ENCODE measurements at regions of chr2 and their contacts with region 1.

Region 1: GRCh38 chr2:100938031-100939026 is 63.8 kb upstream of the RPL31 start:
- DNase-seq: no peak
- ATAC-seq: no peak
- H3K4me3 ChIP-seq: no peak overlapping the region
- H3K27ac ChIP-seq: no peak overlapping the region
- H3K4me1 ChIP-seq: peaks cover 3 to 10% of the 10 kb centered on the region in 2 donors
- H3K27me3 ChIP-seq: no peaks in the 10 kb centered on the region

Region 2: DNA sequence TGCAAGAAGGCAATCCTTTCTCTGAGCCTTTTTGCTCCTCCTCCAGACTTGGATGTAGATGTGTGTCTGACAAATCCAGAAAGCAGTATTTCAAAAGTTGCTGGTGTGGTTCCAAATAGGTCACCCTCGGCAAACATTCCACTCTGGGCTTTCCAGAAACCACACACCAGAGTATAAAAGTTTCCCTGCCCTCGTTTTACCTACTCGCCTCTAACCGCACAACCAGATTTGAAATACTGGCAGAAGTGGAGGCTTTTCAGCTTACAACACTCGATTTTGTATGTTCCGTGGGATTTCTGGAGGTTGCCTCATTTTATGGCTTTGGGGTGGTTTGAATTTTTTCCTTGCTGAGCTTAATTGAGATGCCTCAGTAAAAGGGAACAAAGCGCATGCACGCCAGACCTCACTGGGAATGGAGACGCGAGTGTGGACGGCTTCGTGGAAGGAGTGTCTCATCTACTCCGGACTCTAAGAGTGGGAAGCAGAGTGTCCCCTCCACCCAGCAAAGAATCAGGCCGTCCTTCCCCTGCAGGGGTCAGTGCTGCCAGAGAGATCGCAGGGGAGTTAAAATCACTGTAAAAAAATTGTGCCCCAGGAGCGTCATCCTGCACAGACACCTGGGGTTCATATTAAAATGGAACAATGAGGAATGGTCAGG is 19.8 kb after region 1 on chr2:
- intact Hi-C with region 1: loop called in 1 of 2 experiments (anchors 2 kb)
- DNase-seq: peak in 1 of 2 donors; percentile 73
- ATAC-seq: peak; percentile 81
- H3K4me3 ChIP-seq: no peak overlapping the region
- H3K27ac ChIP-seq: peak overlapping the region in 1 of 2 donors; percentile 85
- H3K4me1 ChIP-seq: peaks cover 0 to 3% of the 10 kb centered on the region in 2 donors
- H3K27me3 ChIP-seq: no peaks in the 10 kb centered on the region

Region 3: GRCh38 chr2:101094351-101094750 is 156.0 kb after region 1 on chr2:
- intact Hi-C with region 1: no loop called
- DNase-seq: no peak
- ATAC-seq: no peak
- H3K4me3 ChIP-seq: no peak overlapping the region
- H3K27ac ChIP-seq: no peak overlapping the region
- H3K4me1 ChIP-seq: no peaks in the 10 kb centered on the region
- H3K27me3 ChIP-seq: no peaks in the 10 kb centered on the region

Region 4: GRCh38 chr2:101230541-101230993 is 292.2 kb after region 1 on chr2:
- intact Hi-C with region 1: no loop called
- DNase-seq: no peak
- ATAC-seq: no peak
- H3K4me3 ChIP-seq: no peak overlapping the region
- H3K27ac ChIP-seq: no peak overlapping the region
- H3K4me1 ChIP-seq: no peaks in the 10 kb centered on the region
- H3K27me3 ChIP-seq: no peaks in the 10 kb centered on the region

Region 5: GRCh38 chr2:101546376-101547058 is 608.2 kb after region 1 on chr2:
- intact Hi-C with region 1: no loop called
- DNase-seq: no peak
- ATAC-seq: no peak
- H3K4me3 ChIP-seq: no peak overlapping the region
- H3K27ac ChIP-seq: no peak overlapping the region
- H3K4me1 ChIP-seq: no peaks in the 10 kb centered on the region
- H3K27me3 ChIP-seq: no peaks in the 10 kb centered on the region